ENCODE measurements at regions of chr2 and their contacts with region 1.

Region 1: GRCh38 chr2:85584857-85585783 is 889 bp downstream of the VAMP5 start:
- DNase-seq: peak in 3 of 5 donors; percentile 24 to 32 (median 24)
- H3K4me3 ChIP-seq: peak overlapping the region; percentile 57 to 64
- H3K4me3 Mint-ChIP-seq: peak overlapping the region; percentile 88 to 98 (median 90)
- H3K27ac ChIP-seq: peak overlapping the region; percentile 80
- H3K27ac Mint-ChIP-seq: peak overlapping the region; percentile 85 to 94 (median 92)
- H3K4me1 ChIP-seq: peaks cover 41% of the 10 kb centered on the region
- H3K4me1 Mint-ChIP-seq: peaks cover 38 to 68% (median 52%) of the 10 kb centered on the region in 4 donors
- H3K27me3 ChIP-seq: no peaks in the 10 kb centered on the region
- H3K27me3 Mint-ChIP-seq: no peaks in the 10 kb centered on the region

Region 2: DNA sequence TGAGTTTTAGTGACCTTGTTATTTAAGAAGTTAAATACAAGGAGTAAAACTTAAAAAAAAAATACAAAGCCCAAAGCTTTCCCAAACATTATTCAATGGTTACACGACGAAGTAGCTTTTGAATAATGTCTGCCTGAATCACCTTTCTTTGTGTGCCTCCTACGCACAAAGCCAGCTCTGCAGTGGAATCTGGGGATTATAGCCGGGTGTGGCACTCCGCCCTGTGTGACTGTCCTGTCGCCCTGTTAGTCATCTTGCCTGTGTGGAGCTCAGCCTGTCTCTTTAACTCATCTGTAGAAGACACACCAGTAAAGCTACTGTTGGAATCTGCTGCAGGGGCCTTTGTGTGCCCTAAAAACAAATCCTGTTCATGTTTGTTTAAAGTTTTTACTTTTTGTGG is 531.3 kb before region 1 on chr2:
- CTCF ChIA-PET with region 1: no interaction called
- POLR2A ChIA-PET with region 1: no interaction called
- intact Hi-C with region 1: no loop called
- DNase-seq: no peak
- H3K4me3 ChIP-seq: no peak overlapping the region
- H3K4me3 Mint-ChIP-seq: peak overlapping the region in 1 of 8 donors; percentile 34
- H3K27ac ChIP-seq: no peak overlapping the region
- H3K27ac Mint-ChIP-seq: peak overlapping the region in 2 of 7 donors; percentile 40 to 47
- H3K4me1 ChIP-seq: peaks cover 9% of the 10 kb centered on the region
- H3K4me1 Mint-ChIP-seq: peaks cover 14 to 39% (median 22%) of the 10 kb centered on the region in 4 donors
- H3K27me3 ChIP-seq: no peaks in the 10 kb centered on the region
- H3K27me3 Mint-ChIP-seq: no peaks in the 10 kb centered on the region

Region 3: GRCh38 chr2:85602476-85603234 is 17.5 kb after region 1 on chr2 and contains the start of gene TMEM150A:
- CTCF ChIA-PET with region 1: interaction called, 3 read pairs
- POLR2A ChIA-PET with region 1: interaction called, 50 read pairs
- intact Hi-C with region 1: no loop called
- DNase-seq: peak; percentile 81 to 85 (median 82)
- H3K4me3 ChIP-seq: peak within 1 kb of the TSS; percentile 66 to 95
- H3K4me3 Mint-ChIP-seq: peak within 1 kb of the TSS; percentile 88 to 94 (median 90)
- H3K27ac ChIP-seq: peak within 1 kb of the TSS; percentile 62
- H3K27ac Mint-ChIP-seq: peak within 1 kb of the TSS; percentile 82 to 96 (median 90)
- H3K4me1 ChIP-seq: peaks cover 28% of the 10 kb centered on the region
- H3K4me1 Mint-ChIP-seq: peaks cover 14 to 49% (median 34%) of the 10 kb centered on the region in 4 donors
- H3K27me3 ChIP-seq: no peaks in the 10 kb centered on the region
- H3K27me3 Mint-ChIP-seq: no peaks in the 10 kb centered on the region
- total RNA-seq, gene TMEM150A: 13.3 to 14.3 TPM

Region 4: DNA sequence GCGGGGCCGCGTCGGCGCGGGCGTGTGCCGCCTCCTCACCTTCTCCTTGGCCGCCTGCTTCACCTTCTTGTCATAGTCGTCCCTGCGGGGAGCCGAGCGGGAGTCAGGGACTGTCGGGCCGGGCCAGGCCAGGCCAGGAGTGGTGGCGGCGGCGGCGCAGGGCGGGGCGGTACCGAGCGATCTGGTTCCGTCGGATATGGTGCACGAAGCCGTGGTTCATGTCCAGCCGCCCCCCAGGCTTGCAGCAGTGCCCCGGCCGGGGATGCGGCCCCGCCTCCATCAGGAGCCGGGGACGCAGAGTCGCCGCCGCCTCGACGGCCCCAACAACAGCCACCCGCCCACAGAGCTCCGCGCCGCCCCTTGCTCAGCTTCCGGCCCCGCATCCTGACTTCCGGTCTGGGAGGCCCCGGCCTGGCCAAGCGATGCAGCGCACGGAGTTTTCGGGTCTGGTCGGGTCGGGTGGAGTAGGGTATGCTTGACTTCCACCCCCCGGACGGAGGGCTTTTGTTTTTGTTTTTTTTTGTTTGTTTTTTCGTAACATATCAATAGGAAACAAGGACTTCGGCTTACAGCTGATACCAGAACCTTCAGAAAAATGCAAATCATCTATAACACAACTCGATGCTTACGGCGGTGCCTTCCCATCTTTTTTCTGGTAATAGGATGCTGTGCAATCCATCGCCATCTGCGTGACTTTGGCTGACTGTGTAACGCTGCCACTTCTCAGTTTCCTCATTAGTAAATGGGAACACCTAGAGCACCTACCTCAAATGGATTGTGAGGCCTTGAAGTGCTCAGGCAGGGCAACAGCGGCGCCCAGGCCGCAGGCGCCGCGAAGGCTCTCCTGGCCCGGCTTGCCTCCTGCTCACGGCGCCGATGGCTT is 26.8 kb after region 1 on chr2 and contains the start of gene C2orf68:
- CTCF ChIA-PET with region 1: no interaction called
- POLR2A ChIA-PET with region 1: interaction called, 13 read pairs
- intact Hi-C with region 1: no loop called
- DNase-seq: peak; percentile 77 to 86 (median 77)
- H3K4me3 ChIP-seq: peak within 1 kb of the TSS; percentile 57 to 86
- H3K4me3 Mint-ChIP-seq: peak within 1 kb of the TSS; percentile 96 to 100 (median 98)
- H3K27ac ChIP-seq: peak within 1 kb of the TSS; percentile 72
- H3K27ac Mint-ChIP-seq: peak within 1 kb of the TSS; percentile 94 to 97 (median 97)
- H3K4me1 ChIP-seq: peaks cover 30% of the 10 kb centered on the region
- H3K4me1 Mint-ChIP-seq: peaks cover 13 to 41% (median 25%) of the 10 kb centered on the region in 4 donors
- H3K27me3 ChIP-seq: no peaks in the 10 kb centered on the region
- H3K27me3 Mint-ChIP-seq: no peaks in the 10 kb centered on the region
- total RNA-seq, gene C2orf68: 87.3 to 89.9 TPM